Activated B cell treated with CpG ODN at 0.5 μM for 24 hours (primary cell): ENCODE measurements at regions of chr9 and their contacts with region 1.

Region 1: GRCh38 chr9:125631391-125632085 is 75.5 kb downstream of the MAPKAP1 start:
- DNase-seq: no peak
- ATAC-seq: no peak
- H3K4me3 Mint-ChIP-seq: peak overlapping the region; percentile 59
- H3K27ac Mint-ChIP-seq: peak overlapping the region; percentile 90
- H3K4me1 Mint-ChIP-seq: peaks cover 84% of the 10 kb centered on the region
- H3K27me3 Mint-ChIP-seq: no peaks in the 10 kb centered on the region
- CTCF ChIP-seq: no peak

Region 2: GRCh38 chr9:125407974-125408900 is 223.3 kb before region 1 on chr9:
- CTCF ChIA-PET with region 1: no interaction called
- POLR2A ChIA-PET with region 1: interaction called, 5 read pairs
- intact Hi-C with region 1: loop called (anchors 1 kb)
- DNase-seq: peak; percentile 79
- ATAC-seq: peak; percentile 86
- H3K4me3 Mint-ChIP-seq: peak overlapping the region; percentile 75
- H3K27ac Mint-ChIP-seq: no peak overlapping the region
- H3K4me1 Mint-ChIP-seq: peaks cover 16% of the 10 kb centered on the region
- H3K27me3 Mint-ChIP-seq: peaks cover 23% of the 10 kb centered on the region
- CTCF ChIP-seq: peak; percentile 68

Region 3: DNA sequence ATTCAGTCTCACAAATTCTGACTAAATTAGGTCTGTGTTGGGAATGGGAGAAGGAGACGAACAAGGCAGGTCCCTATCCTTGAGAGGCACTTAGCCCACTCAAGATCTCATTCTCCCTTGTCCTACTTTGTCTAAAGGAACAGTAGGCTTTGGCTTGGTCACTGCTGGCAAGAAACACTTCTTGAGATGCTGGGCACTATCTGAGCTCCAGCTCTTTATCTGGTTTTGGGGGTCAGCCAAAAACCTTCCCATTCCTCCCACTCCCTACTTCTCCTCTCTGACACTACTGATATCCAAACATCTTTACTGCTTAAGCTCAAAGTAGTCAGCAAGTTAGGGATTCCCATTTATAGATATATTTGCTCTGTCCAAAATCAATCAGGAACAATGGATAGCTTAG is 79.8 kb before region 1 on chr9:
- CTCF ChIA-PET with region 1: no interaction called
- POLR2A ChIA-PET with region 1: no interaction called
- intact Hi-C with region 1: no loop called
- DNase-seq: no peak
- ATAC-seq: no peak
- H3K4me3 Mint-ChIP-seq: no peak overlapping the region
- H3K27ac Mint-ChIP-seq: no peak overlapping the region
- H3K4me1 Mint-ChIP-seq: no peaks in the 10 kb centered on the region
- H3K27me3 Mint-ChIP-seq: no peaks in the 10 kb centered on the region
- CTCF ChIP-seq: no peak

Region 4: DNA sequence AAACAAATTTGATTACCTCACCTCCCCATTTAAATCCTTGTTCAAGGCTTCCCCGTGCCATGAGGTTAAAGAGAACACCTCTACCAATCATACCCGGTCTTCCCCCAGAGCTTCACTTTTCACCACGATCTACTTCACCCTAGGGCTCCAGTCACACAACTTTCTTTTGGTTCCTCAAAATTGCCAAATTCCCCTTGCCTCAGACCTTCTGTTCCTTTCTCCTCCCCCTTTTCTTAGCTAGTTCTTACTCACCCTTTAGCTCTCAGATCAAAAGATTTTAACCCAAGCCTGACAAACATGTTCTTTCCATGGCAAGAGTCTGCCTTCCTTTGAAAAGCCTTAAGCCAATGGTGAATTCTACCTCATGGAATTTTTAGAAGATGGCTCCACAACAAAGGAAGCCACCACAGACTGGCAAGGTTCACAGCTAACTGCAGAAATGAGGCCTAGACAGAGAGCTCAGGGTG is 18.8 kb after region 1 on chr9:
- CTCF ChIA-PET with region 1: interaction called, 8 read pairs
- POLR2A ChIA-PET with region 1: interaction called, 44 read pairs
- intact Hi-C with region 1: loop called (anchors 1 kb)
- DNase-seq: no peak
- ATAC-seq: peak; percentile 93
- H3K4me3 Mint-ChIP-seq: peak overlapping the region; percentile 59
- H3K27ac Mint-ChIP-seq: peak overlapping the region; percentile 86
- H3K4me1 Mint-ChIP-seq: peaks cover 86% of the 10 kb centered on the region
- H3K27me3 Mint-ChIP-seq: no peaks in the 10 kb centered on the region
- CTCF ChIP-seq: no peak

Region 5: GRCh38 chr9:125700791-125701190 is 69.3 kb after region 1 on chr9:
- CTCF ChIA-PET with region 1: interaction called, 3 read pairs
- POLR2A ChIA-PET with region 1: interaction called, 14 read pairs
- intact Hi-C with region 1: loop called (anchors 2 kb)
- DNase-seq: peak; percentile 20
- ATAC-seq: peak; percentile 99
- H3K4me3 Mint-ChIP-seq: peak overlapping the region; percentile 68
- H3K27ac Mint-ChIP-seq: peak overlapping the region; percentile 46
- H3K4me1 Mint-ChIP-seq: peaks cover 74% of the 10 kb centered on the region
- H3K27me3 Mint-ChIP-seq: no peaks in the 10 kb centered on the region
- CTCF ChIP-seq: no peak

Region 6: DNA sequence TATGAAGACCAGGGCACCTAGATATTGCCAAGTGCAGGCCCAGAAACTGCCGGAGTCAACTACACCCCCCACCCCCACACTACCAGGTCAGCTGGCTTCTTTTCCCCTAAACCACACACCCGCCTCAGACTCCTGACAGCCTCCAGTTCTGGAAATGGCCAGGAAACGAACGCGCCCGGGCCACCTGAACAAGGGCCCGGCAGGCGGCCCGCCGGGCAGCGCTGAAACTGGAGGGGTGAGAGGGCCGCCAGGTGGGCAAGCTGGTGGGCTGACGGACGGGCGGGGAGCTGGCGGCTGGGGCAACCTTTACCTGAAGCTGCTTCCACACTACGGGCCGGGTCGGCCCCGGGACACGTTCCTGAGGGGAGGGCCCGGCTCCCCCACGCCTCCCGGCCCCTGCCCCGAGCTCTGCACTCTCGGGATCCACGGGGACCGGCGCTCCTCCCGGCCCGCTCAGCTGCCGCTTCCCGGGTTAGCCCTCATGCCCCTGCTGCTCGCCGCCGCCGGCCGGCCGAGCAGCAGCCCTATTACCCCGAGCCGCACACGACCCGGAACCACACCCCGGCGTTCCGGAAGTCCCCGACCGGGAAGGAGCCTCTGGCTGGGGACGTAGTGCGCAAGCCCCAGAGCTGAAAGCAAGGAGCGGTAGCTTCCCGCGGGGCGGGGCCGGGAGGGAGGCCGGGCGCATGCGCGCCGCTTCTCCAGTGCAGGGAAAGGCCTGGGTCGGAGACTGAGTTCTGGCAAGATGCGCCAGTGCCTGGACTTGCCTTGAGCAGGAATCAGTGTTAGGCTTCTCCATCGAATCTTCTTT is 75.3 kb after region 1 on chr9 and contains the start of gene MAPKAP1:
- CTCF ChIA-PET with region 1: interaction called, 3 read pairs
- POLR2A ChIA-PET with region 1: interaction called, 14 read pairs
- intact Hi-C with region 1: no loop called
- DNase-seq: peak; percentile 86
- ATAC-seq: peak; percentile 99
- H3K4me3 Mint-ChIP-seq: peak within 1 kb of the TSS; percentile 85
- H3K27ac Mint-ChIP-seq: peak within 1 kb of the TSS; percentile 85
- H3K4me1 Mint-ChIP-seq: peaks cover 44% of the 10 kb centered on the region
- H3K27me3 Mint-ChIP-seq: peaks cover 4% of the 10 kb centered on the region
- CTCF ChIP-seq: no peak
- total RNA-seq, gene MAPKAP1: 80.2 and 84.9 TPM in 2 replicates

Region 7: GRCh38 chr9:125820100-125820804 is 188.7 kb after region 1 on chr9:
- CTCF ChIA-PET with region 1: no interaction called
- POLR2A ChIA-PET with region 1: no interaction called
- intact Hi-C with region 1: loop called (anchors 5 kb)
- DNase-seq: no peak
- ATAC-seq: no peak
- H3K4me3 Mint-ChIP-seq: peak overlapping the region; percentile 19
- H3K27ac Mint-ChIP-seq: peak overlapping the region; percentile 35
- H3K4me1 Mint-ChIP-seq: peaks cover 46% of the 10 kb centered on the region
- H3K27me3 Mint-ChIP-seq: no peaks in the 10 kb centered on the region
- CTCF ChIP-seq: no peak